Endothelial cell of umbilical vein (primary cell): ENCODE measurements at regions of chr3 and their contacts with region 1.

Region 1: GRCh38 chr3:122679085-122679881 is 1.4 kb upstream of the PARP14 start:
- DNase-seq: peak; percentile 79
- H3K4me3 ChIP-seq: peak overlapping the region in 2 of 3 experiments; percentile 6 to 8
- H3K27ac ChIP-seq: peak overlapping the region; percentile 65
- H3K4me1 ChIP-seq: peaks cover 20% of the 10 kb centered on the region
- H3K27me3 ChIP-seq: no peaks in the 10 kb centered on the region
- CTCF ChIP-seq: peak; percentile 75 to 80
- POLR2A ChIP-seq: no peak

Region 2: GRCh38 chr3:122356415-122356814 is 322.9 kb before region 1 on chr3:
- CTCF ChIA-PET with region 1: no interaction called
- POLR2A ChIA-PET with region 1: no interaction called
- dilution Hi-C with region 1: no loop called
- intact Hi-C with region 1: no loop called
- DNase-seq: no peak
- H3K4me3 ChIP-seq: no peak overlapping the region
- H3K27ac ChIP-seq: no peak overlapping the region
- H3K4me1 ChIP-seq: no peaks in the 10 kb centered on the region
- H3K27me3 ChIP-seq: no peaks in the 10 kb centered on the region
- CTCF ChIP-seq: peak in 1 of 2 donors; percentile 16
- POLR2A ChIP-seq: no peak

Region 3: GRCh38 chr3:122383771-122384697 is 295.2 kb before region 1 on chr3 and contains the start of gene FAM162A:
- CTCF ChIA-PET with region 1: interaction called, 120 read pairs
- POLR2A ChIA-PET with region 1: no interaction called
- dilution Hi-C with region 1: no loop called
- intact Hi-C with region 1: loop called (anchors 2 kb)
- DNase-seq: peak; percentile 96
- H3K4me3 ChIP-seq: peak within 1 kb of the TSS; percentile 69 to 97 (median 77)
- H3K27ac ChIP-seq: peak within 1 kb of the TSS; percentile 58
- H3K4me1 ChIP-seq: peaks cover 16% of the 10 kb centered on the region
- H3K27me3 ChIP-seq: no peaks in the 10 kb centered on the region
- CTCF ChIP-seq: peak; percentile 53 to 69
- POLR2A ChIP-seq: peak; percentile 86
- total RNA-seq, gene FAM162A: 23.4 and 25.9 TPM in 2 replicates

Region 4: DNA sequence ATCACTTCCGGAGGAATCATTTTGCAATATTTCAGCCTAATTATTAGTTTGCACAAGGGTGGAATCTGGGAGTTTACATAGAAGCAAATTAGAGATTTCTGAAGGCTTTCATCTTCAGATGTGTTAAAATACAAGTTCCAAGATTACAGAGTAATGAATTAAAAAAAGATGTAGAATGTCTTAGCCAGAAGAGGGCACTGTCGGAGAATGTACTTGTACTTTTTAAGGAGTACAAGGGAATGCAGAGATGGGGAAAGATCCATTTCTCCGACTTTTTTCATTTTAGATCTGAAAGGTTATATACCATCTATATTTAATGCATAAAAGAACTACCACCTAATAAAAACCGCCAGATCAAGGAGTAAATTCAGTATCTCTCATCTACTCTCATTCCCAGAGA is 220.3 kb before region 1 on chr3:
- CTCF ChIA-PET with region 1: interaction called, 33 read pairs
- POLR2A ChIA-PET with region 1: no interaction called
- dilution Hi-C with region 1: no loop called
- intact Hi-C with region 1: loop called (anchors 1 kb)
- DNase-seq: peak; percentile 51
- H3K4me3 ChIP-seq: no peak overlapping the region
- H3K27ac ChIP-seq: no peak overlapping the region
- H3K4me1 ChIP-seq: no peaks in the 10 kb centered on the region
- H3K27me3 ChIP-seq: no peaks in the 10 kb centered on the region
- CTCF ChIP-seq: peak in 1 of 2 donors; percentile 3
- POLR2A ChIP-seq: no peak

Region 5: GRCh38 chr3:122564155-122564912 is 114.9 kb before region 1 on chr3 and contains the starts of genes DTX3L and PARP9:
- CTCF ChIA-PET with region 1: interaction called, 129 read pairs
- POLR2A ChIA-PET with region 1: no interaction called
- dilution Hi-C with region 1: no loop called
- intact Hi-C with region 1: loop called (anchors 1 kb)
- DNase-seq: peak; percentile 77
- H3K4me3 ChIP-seq: peak within 1 kb of the TSS; percentile 60 to 96 (median 74)
- H3K27ac ChIP-seq: peak within 1 kb of the TSS; percentile 63
- H3K4me1 ChIP-seq: peaks cover 8% of the 10 kb centered on the region
- H3K27me3 ChIP-seq: no peaks in the 10 kb centered on the region
- CTCF ChIP-seq: no peak
- POLR2A ChIP-seq: peak; percentile 30
- total RNA-seq, gene DTX3L: 13.8 and 20.5 TPM in 2 replicates
- total RNA-seq, gene PARP9: 9.7 and 12.5 TPM in 2 replicates

Region 6: GRCh38 chr3:122689587-122689986 is 10.3 kb after region 1 on chr3:
- CTCF ChIA-PET with region 1: interaction called, 19 read pairs
- POLR2A ChIA-PET with region 1: no interaction called
- dilution Hi-C with region 1: no loop called
- intact Hi-C with region 1: no loop called
- DNase-seq: no peak
- H3K4me3 ChIP-seq: no peak overlapping the region
- H3K27ac ChIP-seq: no peak overlapping the region
- H3K4me1 ChIP-seq: no peaks in the 10 kb centered on the region
- H3K27me3 ChIP-seq: no peaks in the 10 kb centered on the region
- CTCF ChIP-seq: no peak
- POLR2A ChIP-seq: no peak

Region 7: GRCh38 chr3:122705379-122705778 is 26.1 kb after region 1 on chr3:
- CTCF ChIA-PET with region 1: no interaction called
- POLR2A ChIA-PET with region 1: no interaction called
- dilution Hi-C with region 1: no loop called
- intact Hi-C with region 1: no loop called
- DNase-seq: no peak
- H3K4me3 ChIP-seq: no peak overlapping the region
- H3K27ac ChIP-seq: no peak overlapping the region
- H3K4me1 ChIP-seq: no peaks in the 10 kb centered on the region
- H3K27me3 ChIP-seq: no peaks in the 10 kb centered on the region
- CTCF ChIP-seq: no peak
- POLR2A ChIP-seq: no peak

Region 8: DNA sequence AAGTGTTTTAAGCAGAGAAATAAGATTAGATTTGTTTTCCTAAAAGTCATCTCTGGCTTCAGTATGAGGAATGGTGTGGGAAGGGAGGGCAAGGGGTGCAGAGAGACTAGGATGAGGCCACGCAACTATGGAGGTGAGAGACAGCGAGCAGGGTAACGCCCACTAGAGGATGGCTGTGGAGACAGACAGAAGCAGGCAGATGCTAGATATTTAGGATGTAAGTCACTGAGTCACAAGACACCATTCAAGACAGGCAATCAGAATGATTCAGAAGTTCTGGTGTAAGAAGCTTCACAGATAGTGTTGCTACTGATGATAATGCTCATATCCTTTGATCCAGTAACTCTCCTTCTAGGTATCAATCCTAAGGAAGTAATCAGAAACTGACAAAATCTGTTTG is 95.3 kb after region 1 on chr3:
- CTCF ChIA-PET with region 1: no interaction called
- POLR2A ChIA-PET with region 1: no interaction called
- dilution Hi-C with region 1: no loop called
- intact Hi-C with region 1: no loop called
- DNase-seq: no peak
- H3K4me3 ChIP-seq: no peak overlapping the region
- H3K27ac ChIP-seq: no peak overlapping the region
- H3K4me1 ChIP-seq: peaks cover 4% of the 10 kb centered on the region
- H3K27me3 ChIP-seq: no peaks in the 10 kb centered on the region
- CTCF ChIP-seq: no peak
- POLR2A ChIP-seq: no peak